ENCODE measurements at regions of chr16 and their contacts with region 1.

Region 1: GRCh38 chr16:27318392-27319226 is 4.8 kb downstream of the IL4R start:
- DNase-seq: peak; percentile 68
- ATAC-seq: peak; percentile 76
- H3K4me3 Mint-ChIP-seq: peak overlapping the region; percentile 93
- H3K27ac Mint-ChIP-seq: peak overlapping the region; percentile 99
- H3K4me1 Mint-ChIP-seq: peaks cover 70% of the 10 kb centered on the region
- H3K27me3 Mint-ChIP-seq: no peaks in the 10 kb centered on the region

Region 2: GRCh38 chr16:27138266-27138665 is 180.3 kb before region 1 on chr16:
- POLR2A ChIA-PET with region 1: no interaction called
- DNase-seq: no peak
- ATAC-seq: no peak
- H3K4me3 Mint-ChIP-seq: peak overlapping the region; percentile 33
- H3K27ac Mint-ChIP-seq: peak overlapping the region; percentile 76
- H3K4me1 Mint-ChIP-seq: peaks cover 4% of the 10 kb centered on the region
- H3K27me3 Mint-ChIP-seq: peaks cover 10% of the 10 kb centered on the region

Region 3: DNA sequence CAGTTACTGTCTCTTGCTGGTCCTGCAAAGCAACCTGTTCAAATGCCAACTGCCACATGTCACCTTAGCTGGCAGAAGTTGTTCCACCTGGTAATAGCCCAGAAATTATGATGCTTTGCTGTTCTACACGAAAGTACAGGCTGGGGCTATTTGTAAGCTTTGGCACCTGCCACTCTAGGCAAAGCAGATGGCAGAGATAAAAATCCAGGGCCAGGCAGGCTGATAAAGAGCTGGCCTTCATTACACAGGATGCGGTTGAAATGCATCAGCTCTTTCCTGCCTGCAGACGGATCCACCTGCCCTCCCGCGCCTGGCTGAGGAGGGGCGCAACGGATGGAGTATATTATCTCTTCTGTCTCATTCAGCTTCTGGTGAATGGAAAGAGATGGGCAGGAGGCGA is 144.6 kb before region 1 on chr16:
- POLR2A ChIA-PET with region 1: interaction called, 13 read pairs
- DNase-seq: peak; percentile 63
- ATAC-seq: peak; percentile 70
- H3K4me3 Mint-ChIP-seq: peak overlapping the region; percentile 40
- H3K27ac Mint-ChIP-seq: peak overlapping the region; percentile 91
- H3K4me1 Mint-ChIP-seq: peaks cover 57% of the 10 kb centered on the region
- H3K27me3 Mint-ChIP-seq: no peaks in the 10 kb centered on the region

Region 4: GRCh38 chr16:27179500-27180072 is 139.0 kb before region 1 on chr16:
- POLR2A ChIA-PET with region 1: interaction called, 13 read pairs
- DNase-seq: peak; percentile 90
- ATAC-seq: peak; percentile 95
- H3K4me3 Mint-ChIP-seq: no peak overlapping the region
- H3K27ac Mint-ChIP-seq: peak overlapping the region; percentile 50
- H3K4me1 Mint-ChIP-seq: peaks cover 31% of the 10 kb centered on the region
- H3K27me3 Mint-ChIP-seq: peaks cover 4% of the 10 kb centered on the region

Region 5: DNA sequence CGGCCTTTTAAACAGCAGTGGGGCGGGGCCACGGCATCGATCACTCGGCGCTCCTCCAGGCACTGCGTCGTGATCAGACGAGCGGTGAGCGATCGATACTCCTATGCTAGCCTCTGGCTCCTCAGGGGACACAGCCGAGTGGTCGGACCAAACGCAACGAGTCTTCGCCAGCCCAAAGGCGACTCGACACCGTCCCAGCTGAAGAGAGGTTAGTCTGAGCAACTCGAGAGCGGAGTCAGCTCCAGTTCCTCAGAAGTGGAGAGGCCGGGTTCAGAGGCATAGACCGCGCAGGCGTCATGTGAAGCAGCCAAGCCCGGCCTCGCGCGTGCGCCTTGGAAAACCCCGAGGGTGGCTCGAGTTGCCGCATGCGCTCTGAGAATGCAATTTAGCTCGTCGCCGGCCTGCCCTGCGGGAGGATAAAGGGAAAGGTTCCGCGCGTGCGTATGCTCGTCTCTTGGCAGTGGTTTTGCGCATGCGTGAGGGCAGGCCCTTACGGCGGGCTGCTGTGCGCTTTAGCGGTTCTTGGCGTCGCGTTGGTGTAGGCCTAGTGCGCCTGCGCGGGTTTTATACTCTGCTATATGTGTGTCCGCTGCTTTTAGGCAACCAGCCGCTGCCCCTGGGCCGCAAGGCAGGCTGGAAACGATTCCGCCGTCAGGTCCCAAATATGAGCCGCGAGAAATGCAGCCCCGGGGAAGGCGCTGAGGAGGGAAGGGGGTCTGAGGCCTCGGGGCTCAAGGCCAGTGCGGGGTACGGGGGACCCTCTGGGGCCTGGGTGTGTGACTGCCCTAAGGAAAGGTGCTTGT is 115.0 kb before region 1 on chr16 and contains the start of gene KDM8:
- POLR2A ChIA-PET with region 1: interaction called, 13 read pairs
- DNase-seq: peak; percentile 98
- ATAC-seq: peak; percentile 92
- H3K4me3 Mint-ChIP-seq: peak within 1 kb of the TSS; percentile 90
- H3K27ac Mint-ChIP-seq: peak within 1 kb of the TSS; percentile 100
- H3K4me1 Mint-ChIP-seq: peaks cover 37% of the 10 kb centered on the region
- H3K27me3 Mint-ChIP-seq: no peaks in the 10 kb centered on the region
- total RNA-seq, gene KDM8: 20.1 to 21.8 TPM

Region 6: GRCh38 chr16:27273670-27274423 is 44.8 kb before region 1 on chr16:
- POLR2A ChIA-PET with region 1: interaction called, 19 read pairs
- DNase-seq: peak; percentile 44
- ATAC-seq: peak; percentile 82
- H3K4me3 Mint-ChIP-seq: peak overlapping the region; percentile 63
- H3K27ac Mint-ChIP-seq: peak overlapping the region; percentile 98
- H3K4me1 Mint-ChIP-seq: peaks cover 44% of the 10 kb centered on the region
- H3K27me3 Mint-ChIP-seq: no peaks in the 10 kb centered on the region

Region 7: DNA sequence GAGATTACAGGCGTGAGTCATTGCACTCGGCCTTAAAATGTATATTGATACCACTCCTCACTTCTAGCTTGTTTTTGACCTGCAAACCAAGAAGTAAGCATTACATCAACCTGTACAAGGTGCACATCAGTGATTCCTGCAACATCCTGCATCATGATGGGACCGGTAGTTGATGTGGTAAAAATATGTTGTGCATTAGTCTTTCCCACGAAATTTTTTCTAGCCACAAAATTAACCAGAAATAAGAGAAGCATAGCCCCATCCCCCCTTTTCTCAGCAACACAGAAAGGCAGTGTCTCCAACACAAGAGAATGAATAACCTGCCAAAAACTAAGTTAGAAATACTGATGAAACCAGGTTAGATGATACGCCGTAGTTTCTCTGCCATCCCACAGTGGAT is 28.9 kb before region 1 on chr16:
- POLR2A ChIA-PET with region 1: no interaction called
- DNase-seq: no peak
- ATAC-seq: no peak
- H3K4me3 Mint-ChIP-seq: no peak overlapping the region
- H3K27ac Mint-ChIP-seq: no peak overlapping the region
- H3K4me1 Mint-ChIP-seq: peaks cover 27% of the 10 kb centered on the region
- H3K27me3 Mint-ChIP-seq: no peaks in the 10 kb centered on the region